Motor neuron (in vitro differentiated cells): ENCODE measurements at regions of chr5 and their contacts with region 1.

Region 1: DNA sequence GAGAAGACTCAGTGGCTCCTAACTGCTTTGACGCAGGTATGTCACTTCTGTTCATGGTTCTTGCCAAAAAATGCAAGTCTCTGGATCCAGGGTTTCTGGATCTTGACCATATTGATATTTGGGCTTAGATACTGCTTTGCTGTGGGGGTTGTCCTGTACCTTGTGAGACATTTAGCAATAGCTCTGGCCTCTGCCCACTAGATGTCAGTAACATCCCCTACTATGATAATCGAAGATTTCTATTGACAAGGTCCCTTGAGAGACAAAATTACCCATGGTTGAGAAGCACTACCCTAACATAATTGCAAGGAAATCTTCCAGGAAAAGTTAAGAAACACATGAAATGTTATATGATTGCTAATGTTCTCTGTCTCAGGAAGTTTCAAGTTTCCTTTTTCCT is 285.4 kb downstream of the TMEM232 start:
- ATAC-seq: peak in 3 of 8 experiments; percentile 72 to 90 (median 78)
- H3K4me3 ChIP-seq: no peak overlapping the region
- H3K27ac ChIP-seq: no peak overlapping the region
- H3K4me1 ChIP-seq: no peaks in the 10 kb centered on the region

Region 2: GRCh38 chr5:110275878-110276277 is 165.2 kb before region 1 on chr5:
- in situ Hi-C with region 1: no loop called
- ATAC-seq: no peak
- H3K4me3 ChIP-seq: no peak overlapping the region
- H3K27ac ChIP-seq: no peak overlapping the region
- H3K4me1 ChIP-seq: no peaks in the 10 kb centered on the region

Region 3: DNA sequence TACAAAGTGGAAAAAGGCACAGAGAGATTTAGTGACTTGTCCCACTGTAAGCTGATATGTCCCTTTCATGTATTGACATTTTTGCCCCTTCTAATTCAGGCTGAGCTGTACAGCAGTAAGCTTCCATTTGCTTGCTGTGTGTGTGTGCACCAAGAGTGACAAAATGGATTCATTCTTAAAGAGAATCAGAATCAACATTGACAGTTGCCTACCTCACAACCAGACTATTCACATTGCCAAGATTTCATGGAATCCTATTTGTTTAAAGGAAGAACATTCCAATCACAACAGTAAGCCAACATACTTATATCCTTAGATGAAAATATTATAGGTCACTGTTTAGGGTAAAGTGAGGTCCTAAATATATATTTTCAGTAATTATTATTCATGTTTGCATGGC is 182.8 kb after region 1 on chr5:
- in situ Hi-C with region 1: loop called in 1 of 9 experiments (anchors 25 kb)
- ATAC-seq: peak in 1 of 8 experiments; percentile 62
- H3K4me3 ChIP-seq: no peak overlapping the region
- H3K27ac ChIP-seq: no peak overlapping the region
- H3K4me1 ChIP-seq: no peaks in the 10 kb centered on the region